ENCODE measurements at regions of chr3 and their contacts with region 1.

Region 1: GRCh38 chr3:161423911-161424522 is 52.7 kb upstream of the SPTSSB start:
- DNase-seq: peak; percentile 86
- ATAC-seq: peak; percentile 16; the same call in 1 of the 2 replicates
- H3K4me3 ChIP-seq: no peak overlapping the region
- H3K27ac ChIP-seq: peak overlapping the region; percentile 96
- H3K4me1 ChIP-seq: peaks cover 51% of the 10 kb centered on the region
- H3K27me3 ChIP-seq: no peaks in the 10 kb centered on the region
- CTCF ChIP-seq: peak; percentile 77

Region 2: DNA sequence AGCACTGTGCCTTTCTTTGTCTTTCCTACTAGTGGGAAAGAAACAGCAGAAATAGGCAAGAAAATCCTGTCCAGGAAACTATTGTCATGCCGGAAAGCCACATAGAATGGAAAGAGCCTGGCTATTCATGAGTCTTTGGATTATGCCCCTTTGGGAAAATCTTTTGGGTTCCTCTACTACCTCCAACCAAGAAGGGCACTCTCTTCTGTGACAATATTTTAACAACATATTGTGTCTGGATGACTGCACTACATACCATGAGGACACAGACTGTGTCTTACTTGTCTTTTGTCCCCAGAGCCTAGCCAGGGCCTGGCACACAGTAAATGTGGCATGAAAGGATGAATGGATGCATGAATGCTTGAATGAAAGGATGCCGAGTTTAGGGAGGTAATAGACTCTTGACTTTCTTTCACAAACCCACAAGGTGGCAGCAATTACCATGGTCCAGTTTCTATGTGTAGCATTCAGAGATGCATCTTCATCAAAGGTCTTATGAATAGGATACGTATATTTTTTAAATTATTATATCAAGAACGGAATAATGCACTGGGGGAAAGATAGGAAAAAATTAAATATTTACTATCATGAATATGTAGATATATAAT is 716.7 kb before region 1 on chr3:
- CTCF ChIA-PET with region 1: no interaction called
- POLR2A ChIA-PET with region 1: no interaction called
- intact Hi-C with region 1: loop called (anchors 1 kb)
- DNase-seq: peak; percentile 73
- ATAC-seq: peak; percentile 93
- H3K4me3 ChIP-seq: no peak overlapping the region
- H3K27ac ChIP-seq: no peak overlapping the region
- H3K4me1 ChIP-seq: no peaks in the 10 kb centered on the region
- H3K27me3 ChIP-seq: no peaks in the 10 kb centered on the region
- CTCF ChIP-seq: peak; percentile 70

Region 3: GRCh38 chr3:160941885-160942494 is 482.0 kb before region 1 on chr3:
- CTCF ChIA-PET with region 1: no interaction called
- POLR2A ChIA-PET with region 1: no interaction called
- intact Hi-C with region 1: loop called (anchors 5 kb)
- DNase-seq: peak; percentile 90
- ATAC-seq: peak; percentile 88
- H3K4me3 ChIP-seq: no peak overlapping the region
- H3K27ac ChIP-seq: no peak overlapping the region
- H3K4me1 ChIP-seq: no peaks in the 10 kb centered on the region
- H3K27me3 ChIP-seq: no peaks in the 10 kb centered on the region
- CTCF ChIP-seq: peak; percentile 92

Region 4: DNA sequence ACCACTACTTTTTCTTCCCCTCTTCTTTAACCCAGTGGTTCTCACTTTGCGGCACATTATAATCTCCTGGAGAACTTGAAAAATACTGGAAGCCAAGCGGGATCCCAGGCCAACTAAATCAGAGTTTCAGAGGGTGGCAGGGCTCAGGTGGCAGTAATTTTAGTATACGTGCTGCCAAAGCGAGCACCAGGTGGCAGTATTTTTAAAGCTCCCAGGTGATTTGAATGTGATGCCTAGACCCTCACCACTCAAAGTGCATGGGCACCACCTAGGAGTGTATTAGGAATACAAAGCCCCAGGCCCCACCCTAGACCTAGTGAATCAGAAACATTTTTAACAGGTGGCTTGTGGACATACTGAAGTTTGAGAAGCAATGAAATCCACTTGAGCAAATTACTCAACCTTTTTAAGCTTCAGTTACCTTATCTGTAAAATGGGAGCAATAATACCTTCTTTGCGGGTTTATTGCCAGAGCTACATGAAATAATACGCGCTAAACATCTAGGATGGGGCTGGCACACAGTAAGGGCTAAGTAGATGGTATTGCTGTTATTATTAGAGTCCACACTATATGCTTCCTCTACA is 327.2 kb before region 1 on chr3:
- CTCF ChIA-PET with region 1: interaction called, 3 read pairs
- POLR2A ChIA-PET with region 1: no interaction called
- intact Hi-C with region 1: loop called (anchors 5 kb)
- DNase-seq: peak; percentile 72
- ATAC-seq: peak; percentile 77
- H3K4me3 ChIP-seq: no peak overlapping the region
- H3K27ac ChIP-seq: no peak overlapping the region
- H3K4me1 ChIP-seq: 0 out of 2 replicates have a peak, but pooled peaks cover 11% of the 10 kb centered on the region
- H3K27me3 ChIP-seq: no peaks in the 10 kb centered on the region
- CTCF ChIP-seq: peak; percentile 93

Region 5: DNA sequence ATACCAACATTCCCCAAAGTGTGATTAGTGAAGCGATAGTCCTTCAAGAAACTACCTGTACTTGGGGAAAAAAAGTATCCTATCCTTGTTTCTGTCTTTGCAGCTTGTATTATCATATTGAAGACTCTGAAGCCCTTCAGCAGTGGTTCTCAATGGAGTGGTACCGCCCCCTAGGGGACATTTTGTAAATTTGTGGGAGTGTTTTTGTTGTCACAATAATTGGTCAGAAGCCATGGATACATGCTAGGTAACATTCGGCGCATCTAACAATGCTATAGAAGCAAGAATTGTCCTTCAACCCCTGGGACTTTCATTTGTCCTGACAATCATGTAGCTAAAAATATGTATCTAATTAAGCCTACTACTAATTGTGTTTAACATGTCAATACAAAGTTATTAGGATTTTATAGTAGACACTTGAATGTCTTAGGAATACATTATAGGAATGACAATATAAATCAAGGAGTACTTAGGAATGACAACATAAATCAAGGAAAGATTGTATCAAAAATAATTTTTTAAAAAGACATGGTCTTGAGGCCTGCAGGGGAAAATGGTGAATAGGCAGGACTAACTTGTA is 149.2 kb before region 1 on chr3:
- CTCF ChIA-PET with region 1: no interaction called
- POLR2A ChIA-PET with region 1: interaction called, 3 read pairs
- intact Hi-C with region 1: loop called (anchors 1 kb)
- DNase-seq: peak; percentile 85
- ATAC-seq: peak; percentile 44
- H3K4me3 ChIP-seq: no peak overlapping the region
- H3K27ac ChIP-seq: peak overlapping the region; percentile 50
- H3K4me1 ChIP-seq: peaks cover 20% of the 10 kb centered on the region
- H3K27me3 ChIP-seq: no peaks in the 10 kb centered on the region
- CTCF ChIP-seq: peak; percentile 93

Region 6: GRCh38 chr3:161409069-161409468 is 14.9 kb before region 1 on chr3:
- CTCF ChIA-PET with region 1: interaction called, 3 read pairs
- POLR2A ChIA-PET with region 1: interaction called, 4 read pairs
- intact Hi-C with region 1: loop called (anchors 1 kb)
- DNase-seq: peak; percentile 94
- ATAC-seq: no peak
- H3K4me3 ChIP-seq: no peak overlapping the region
- H3K27ac ChIP-seq: peak overlapping the region; percentile 98
- H3K4me1 ChIP-seq: peaks cover 82% of the 10 kb centered on the region
- H3K27me3 ChIP-seq: no peaks in the 10 kb centered on the region
- CTCF ChIP-seq: peak; percentile 92